Mammary epithelial cell (primary cell): ENCODE measurements at regions of chr12 and their contacts with region 1.

Region 1: GRCh38 chr12:75480469-75480949 is at the start of gene GLIPR1:
- DNase-seq: peak; percentile 95
- H3K4me3 ChIP-seq: peak within 1 kb of the TSS; percentile 49 to 71 (median 67)
- H3K27ac ChIP-seq: peak within 1 kb of the TSS; percentile 85
- H3K4me1 ChIP-seq: peaks cover 41% of the 10 kb centered on the region
- H3K27me3 ChIP-seq: no peaks in the 10 kb centered on the region
- CTCF ChIP-seq: no peak
- total RNA-seq, gene GLIPR1: 92.4 to 96.0 TPM

Region 2: GRCh38 chr12:75360920-75361319 is 119.6 kb before region 1 on chr12:
- CTCF ChIA-PET with region 1: no interaction called
- dilution Hi-C with region 1: no loop called
- in situ Hi-C with region 1: no loop called
- intact Hi-C with region 1: no loop called
- DNase-seq: no peak
- H3K4me3 ChIP-seq: no peak overlapping the region
- H3K27ac ChIP-seq: no peak overlapping the region
- H3K4me1 ChIP-seq: no peaks in the 10 kb centered on the region
- H3K27me3 ChIP-seq: no peaks in the 10 kb centered on the region
- CTCF ChIP-seq: no peak

Region 3: GRCh38 chr12:75437564-75437963 is 42.9 kb before region 1 on chr12:
- CTCF ChIA-PET with region 1: no interaction called
- dilution Hi-C with region 1: no loop called
- in situ Hi-C with region 1: no loop called
- intact Hi-C with region 1: loop called (anchors 1 kb)
- DNase-seq: peak; percentile 53
- H3K4me3 ChIP-seq: no peak overlapping the region
- H3K27ac ChIP-seq: no peak overlapping the region
- H3K4me1 ChIP-seq: peaks cover 19% of the 10 kb centered on the region
- H3K27me3 ChIP-seq: no peaks in the 10 kb centered on the region
- CTCF ChIP-seq: peak; percentile 30 to 52

Region 4: GRCh38 chr12:75444429-75445136 is 35.9 kb before region 1 on chr12:
- CTCF ChIA-PET with region 1: no interaction called
- dilution Hi-C with region 1: no loop called
- in situ Hi-C with region 1: no loop called
- intact Hi-C with region 1: loop called (anchors 2 kb)
- DNase-seq: peak; percentile 64
- H3K4me3 ChIP-seq: no peak overlapping the region
- H3K27ac ChIP-seq: no peak overlapping the region
- H3K4me1 ChIP-seq: peaks cover 34% of the 10 kb centered on the region
- H3K27me3 ChIP-seq: no peaks in the 10 kb centered on the region
- CTCF ChIP-seq: no peak